ENCODE measurements at regions of chr12 and their contacts with region 1.

Region 1: DNA sequence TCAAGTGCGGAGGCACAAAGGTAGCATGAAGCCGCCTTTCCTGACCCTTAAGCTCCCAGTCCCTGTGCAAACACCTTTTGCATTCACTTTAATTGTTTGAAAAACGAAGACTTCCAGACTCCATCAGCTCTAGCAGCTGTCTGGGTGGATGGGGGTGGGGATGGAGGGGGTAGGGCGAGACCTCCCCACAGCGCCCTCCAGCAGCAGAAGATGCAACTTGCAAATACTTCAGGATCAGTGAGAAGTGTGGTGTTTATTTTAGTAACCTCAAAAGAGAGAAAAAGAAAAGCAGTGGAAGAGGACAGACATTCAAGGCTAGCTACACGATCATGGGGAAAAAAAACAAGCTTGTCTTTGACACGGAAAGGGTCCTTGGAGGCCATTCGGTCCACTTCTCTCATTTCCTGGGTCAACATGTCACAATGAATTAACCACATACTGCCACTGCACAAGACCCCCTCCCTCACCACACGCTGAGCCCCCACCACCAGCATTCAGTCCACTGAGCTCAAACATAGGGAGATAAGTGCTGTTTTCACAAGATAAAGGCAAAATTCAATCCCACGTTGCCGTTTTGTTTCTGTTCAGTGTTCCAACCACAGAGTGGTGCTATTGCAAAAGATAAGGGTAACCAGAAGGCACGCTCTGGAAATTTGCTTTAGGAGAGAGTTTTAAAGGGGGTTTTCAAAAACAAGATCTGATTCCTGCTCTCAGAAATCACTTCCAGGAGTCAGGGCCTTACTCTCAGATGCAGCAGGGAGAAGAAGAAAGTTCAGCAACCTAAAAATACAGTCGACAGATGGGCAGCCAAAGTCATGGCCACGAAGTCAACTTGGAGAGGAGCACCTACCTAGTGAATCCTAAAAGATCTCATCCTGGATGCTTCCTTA is 3.3 kb upstream of the NTF3 start:
- DNase-seq: no peak
- H3K4me3 ChIP-seq: peak overlapping the region; percentile 42
- H3K27ac ChIP-seq: no peak overlapping the region
- H3K27me3 ChIP-seq: peaks cover 6% of the 10 kb centered on the region
- CTCF ChIP-seq: peak; percentile 80

Region 2: GRCh38 chr12:5171701-5172100 is 256.9 kb before region 1 on chr12:
- CTCF ChIA-PET with region 1: interaction called, 34 read pairs
- POLR2A ChIA-PET with region 1: no interaction called
- DNase-seq: peak; percentile 47
- H3K4me3 ChIP-seq: no peak overlapping the region
- H3K27ac ChIP-seq: no peak overlapping the region
- H3K27me3 ChIP-seq: no peaks in the 10 kb centered on the region
- CTCF ChIP-seq: peak; percentile 81

Region 3: DNA sequence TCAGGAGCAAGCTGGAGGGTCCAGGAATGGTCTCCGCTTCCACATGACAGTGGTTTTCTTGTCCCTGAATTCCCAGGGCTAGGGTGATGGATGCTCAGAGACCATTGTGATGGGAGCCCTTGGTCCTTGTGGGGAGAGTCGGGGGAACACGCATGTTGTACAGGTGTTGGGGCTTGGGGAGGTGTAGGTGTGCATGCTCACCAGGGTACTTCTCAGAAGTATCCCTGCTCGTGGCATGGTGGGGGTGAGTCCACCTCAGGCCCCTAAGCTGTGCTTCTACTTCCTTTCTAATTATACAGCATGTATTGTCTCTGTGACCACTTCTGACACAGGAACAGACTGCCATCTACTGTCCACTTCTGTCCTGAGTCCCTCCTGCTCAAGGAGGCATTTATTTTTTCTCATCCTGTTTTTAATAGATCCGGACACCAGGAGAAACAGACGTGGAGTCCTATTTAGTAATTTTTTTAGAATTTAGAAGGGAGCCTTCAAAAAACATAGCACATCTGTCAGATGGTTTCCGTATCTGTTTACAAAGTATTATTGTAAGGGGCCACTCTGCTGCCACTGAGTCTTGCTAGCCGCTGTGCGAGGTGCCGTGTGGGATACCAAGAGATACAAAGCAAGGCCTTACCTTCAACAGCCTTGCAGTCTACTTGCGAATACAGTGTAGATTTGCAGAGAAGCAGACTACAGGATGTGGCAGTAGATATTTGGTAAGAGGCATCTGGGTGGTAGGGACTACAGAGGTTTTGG is 13.9 kb after region 1 on chr12:
- CTCF ChIA-PET with region 1: interaction called, 30 read pairs
- POLR2A ChIA-PET with region 1: interaction called, 21 read pairs
- DNase-seq: no peak
- H3K4me3 ChIP-seq: no peak overlapping the region
- H3K27ac ChIP-seq: no peak overlapping the region
- H3K27me3 ChIP-seq: no peaks in the 10 kb centered on the region
- CTCF ChIP-seq: peak; percentile 57

Region 4: DNA sequence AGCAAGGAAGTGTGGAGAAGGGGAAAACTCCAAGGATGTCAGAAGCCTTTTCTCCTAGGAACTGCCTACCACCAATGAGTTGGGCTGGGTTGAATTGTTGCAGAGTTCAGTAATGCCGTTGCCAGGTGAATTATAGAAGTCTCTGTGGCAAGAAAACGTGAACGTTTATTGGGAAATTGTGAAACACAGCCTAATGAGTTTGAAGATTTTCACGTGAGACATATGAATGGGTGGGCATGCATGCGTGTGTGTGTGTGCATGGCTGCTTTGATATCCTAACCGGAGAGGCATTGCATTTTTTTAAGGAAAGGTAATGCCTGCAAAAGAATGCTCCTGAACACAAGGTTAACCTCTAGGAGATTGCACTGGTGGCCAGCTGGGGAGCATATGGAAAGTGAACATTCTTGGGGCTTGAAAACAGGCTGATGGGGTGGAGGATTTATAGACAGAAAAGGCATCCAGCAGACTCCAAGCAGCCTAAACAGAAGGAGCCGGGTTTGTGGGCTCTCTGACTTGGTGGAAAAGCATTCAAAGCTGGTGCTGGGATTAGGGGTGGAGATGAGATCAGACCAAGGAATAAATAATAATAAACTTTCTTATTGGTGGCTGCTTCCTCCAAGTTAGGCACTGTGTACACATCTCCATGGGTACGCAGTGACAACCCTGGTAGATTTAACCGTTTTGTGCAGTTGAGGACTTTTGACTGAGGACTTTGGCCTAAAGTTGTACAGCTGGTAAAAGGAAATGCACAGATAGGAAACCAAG is 71.2 kb after region 1 on chr12:
- CTCF ChIA-PET with region 1: interaction called, 8 read pairs
- POLR2A ChIA-PET with region 1: interaction called, 11 read pairs
- DNase-seq: peak; percentile 95
- H3K4me3 ChIP-seq: no peak overlapping the region
- H3K27ac ChIP-seq: peak overlapping the region; percentile 97
- H3K27me3 ChIP-seq: no peaks in the 10 kb centered on the region
- CTCF ChIP-seq: no peak

Region 5: DNA sequence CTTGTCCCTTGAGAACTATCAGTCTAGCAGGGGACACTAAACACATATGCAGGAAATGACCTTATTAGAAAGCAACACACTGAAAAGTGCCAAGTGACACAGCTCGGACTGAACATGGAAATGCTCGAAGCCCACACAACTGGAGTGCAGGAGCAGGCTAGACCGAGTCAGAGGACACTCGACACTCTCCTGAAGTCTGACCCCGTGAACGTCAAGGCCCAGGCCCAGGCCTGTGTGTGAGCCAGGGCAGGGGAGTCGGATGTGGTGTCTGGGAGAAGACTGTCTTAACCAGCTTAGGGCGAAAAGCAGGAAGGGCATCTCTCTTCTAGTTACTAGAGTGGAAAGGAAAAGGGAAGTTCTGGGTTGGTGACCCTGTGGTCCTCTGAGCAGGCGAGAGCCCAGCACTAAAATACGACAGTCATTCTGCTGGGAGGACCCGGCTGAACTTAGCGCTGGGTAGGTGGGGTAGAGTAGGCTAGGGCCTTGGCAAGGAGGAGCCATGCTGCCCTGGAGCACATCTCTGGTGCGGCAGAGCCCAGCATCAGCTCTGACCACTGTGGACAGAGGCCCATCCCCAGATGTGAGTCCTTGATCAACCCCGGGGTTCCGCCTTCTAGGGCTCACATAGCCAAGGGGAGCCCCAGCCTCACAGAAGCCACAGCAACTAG is 96.3 kb after region 1 on chr12:
- CTCF ChIA-PET with region 1: interaction called, 10 read pairs
- POLR2A ChIA-PET with region 1: interaction called, 3 read pairs
- DNase-seq: no peak
- H3K4me3 ChIP-seq: no peak overlapping the region
- H3K27ac ChIP-seq: no peak overlapping the region
- H3K27me3 ChIP-seq: no peaks in the 10 kb centered on the region
- CTCF ChIP-seq: no peak

Region 6: DNA sequence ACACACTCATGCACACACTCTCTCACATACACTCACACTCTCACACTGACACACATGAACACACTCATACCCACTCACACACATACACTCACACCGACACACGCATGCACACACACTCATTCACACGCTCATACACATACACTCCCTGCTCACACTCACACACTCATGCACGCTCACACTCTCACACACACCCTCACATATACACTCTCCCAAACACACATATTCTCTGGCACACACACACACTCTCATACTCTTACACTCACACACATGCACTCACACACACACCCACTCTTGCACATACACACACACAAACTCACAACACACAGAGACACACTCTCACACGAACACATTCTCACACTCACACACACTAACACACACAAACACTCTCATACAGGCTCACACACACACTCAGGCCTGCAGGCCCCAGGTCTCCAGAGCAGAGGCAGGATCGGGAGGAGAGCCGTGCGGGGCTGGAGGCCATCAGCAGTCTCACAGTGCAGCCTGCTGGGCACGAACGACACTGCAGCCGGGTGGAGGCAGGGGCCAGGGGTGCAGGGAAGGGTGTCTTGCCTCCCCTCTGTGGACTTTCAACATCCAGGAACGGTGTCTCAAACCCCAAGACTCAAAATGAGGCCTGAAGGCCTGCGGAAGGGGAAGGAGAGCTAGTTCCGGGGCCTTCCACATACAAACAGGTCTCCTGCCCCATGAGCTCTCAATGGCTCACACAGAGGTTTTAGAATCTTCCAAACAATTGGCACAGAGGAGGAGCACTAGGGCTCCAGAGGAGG is 367.8 kb after region 1 on chr12:
- CTCF ChIA-PET with region 1: interaction called, 24 read pairs
- POLR2A ChIA-PET with region 1: no interaction called
- DNase-seq: no peak
- H3K4me3 ChIP-seq: no peak overlapping the region
- H3K27ac ChIP-seq: no peak overlapping the region
- H3K27me3 ChIP-seq: peaks cover 4% of the 10 kb centered on the region
- CTCF ChIP-seq: peak; percentile 66